Activated CD4-positive, alpha-beta T cell treated with anti-CD3 and anti-CD28 coated beads, Interleukin-2, amount 10 ng/mL, durations not matched to agents 24 days and 14 days (primary cell): ENCODE measurements at regions of chr3 and their contacts with region 1.

Region 1: DNA sequence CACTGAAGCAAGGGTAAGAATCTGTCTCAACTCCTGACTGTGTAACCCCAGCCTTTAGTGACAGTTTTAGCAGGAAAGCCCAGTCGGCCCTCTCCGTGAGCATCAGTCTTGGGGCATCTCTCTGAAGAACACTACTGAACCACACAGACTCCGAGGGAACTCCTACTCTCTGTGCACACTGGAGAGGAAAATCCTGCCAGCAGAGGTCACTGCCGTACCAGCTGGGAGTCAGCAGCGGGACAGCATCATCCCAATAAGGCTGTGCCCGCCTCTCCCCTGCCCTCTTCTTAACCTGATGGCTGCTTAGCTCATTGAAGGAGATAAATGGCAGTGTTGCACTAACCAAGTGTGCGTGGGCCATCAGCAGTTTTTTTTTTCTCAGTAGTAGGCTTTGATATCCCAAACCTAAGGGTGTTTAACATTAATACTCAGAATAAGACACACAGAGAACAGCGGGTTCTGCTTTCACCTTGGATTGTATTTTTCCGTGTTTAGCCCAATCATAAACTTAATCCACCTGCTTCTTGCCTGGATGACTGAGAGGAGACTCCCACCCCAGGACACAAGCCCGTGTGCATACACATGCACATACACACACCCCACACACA is 26.6 kb upstream of the RASA2 start:
- DNase-seq: peak; percentile 96
- H3K4me3 Mint-ChIP-seq: no peak overlapping the region
- H3K27ac Mint-ChIP-seq: no peak overlapping the region
- H3K4me1 Mint-ChIP-seq: peaks cover 19% of the 10 kb centered on the region
- H3K27me3 Mint-ChIP-seq: peaks cover 1% of the 10 kb centered on the region

Region 2: DNA sequence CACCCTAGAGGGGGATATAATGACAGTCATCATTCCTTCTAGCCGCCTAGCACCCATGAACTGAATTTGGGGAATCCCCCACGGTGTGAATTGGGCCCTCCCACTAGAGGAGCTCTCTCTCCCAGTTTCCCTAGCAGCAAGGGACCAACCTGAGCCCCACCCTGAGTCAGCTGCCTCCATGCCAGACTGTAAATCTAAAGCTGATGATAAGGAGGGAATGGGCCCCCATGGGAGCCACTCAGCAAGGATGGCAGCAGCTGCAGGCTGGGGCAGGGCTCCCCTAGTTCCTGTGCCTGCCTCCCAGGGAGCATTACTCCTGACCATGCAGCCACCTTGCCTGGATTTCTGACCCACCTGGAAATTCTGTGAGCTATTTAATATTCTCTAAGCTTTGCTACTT is 285.5 kb before region 1 on chr3:
- intact Hi-C with region 1: no loop called
- DNase-seq: no peak
- H3K4me3 Mint-ChIP-seq: no peak overlapping the region
- H3K27ac Mint-ChIP-seq: no peak overlapping the region
- H3K4me1 Mint-ChIP-seq: no peaks in the 10 kb centered on the region
- H3K27me3 Mint-ChIP-seq: peaks cover 9% of the 10 kb centered on the region

Region 3: DNA sequence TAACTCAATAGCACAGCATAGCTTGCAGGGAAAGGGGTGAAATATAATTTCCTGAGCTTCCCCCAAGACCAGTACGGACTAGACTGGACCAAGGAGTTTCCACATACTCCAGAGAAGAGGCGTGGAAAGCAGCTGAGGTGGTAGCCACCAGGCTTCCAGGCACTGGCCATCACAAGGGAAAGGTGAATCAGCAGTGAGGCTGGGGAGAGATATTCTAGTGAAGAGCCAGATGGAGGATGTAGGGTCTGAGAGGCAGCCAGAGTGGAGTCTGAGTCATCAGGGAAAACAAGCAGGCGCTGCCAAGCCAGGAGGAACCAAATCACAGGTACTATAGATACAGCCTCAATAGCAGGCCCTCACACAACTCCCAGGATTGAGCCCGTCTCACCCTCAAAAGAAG is 17.0 kb after region 1 on chr3:
- intact Hi-C with region 1: loop called (anchors 1 kb)
- DNase-seq: peak; percentile 53
- H3K4me3 Mint-ChIP-seq: no peak overlapping the region
- H3K27ac Mint-ChIP-seq: no peak overlapping the region
- H3K4me1 Mint-ChIP-seq: peaks cover 30% of the 10 kb centered on the region
- H3K27me3 Mint-ChIP-seq: peaks cover 13% of the 10 kb centered on the region

Region 4: GRCh38 chr3:141561426-141562034 is 101.3 kb after region 1 on chr3:
- intact Hi-C with region 1: loop called (anchors 1 kb)
- DNase-seq: peak; percentile 87
- H3K4me3 Mint-ChIP-seq: no peak overlapping the region
- H3K27ac Mint-ChIP-seq: no peak overlapping the region
- H3K4me1 Mint-ChIP-seq: peaks cover 13% of the 10 kb centered on the region
- H3K27me3 Mint-ChIP-seq: no peaks in the 10 kb centered on the region

Region 5: GRCh38 chr3:141644931-141645330 is 184.7 kb after region 1 on chr3:
- intact Hi-C with region 1: loop called (anchors 1 kb)
- DNase-seq: peak; percentile 91
- H3K4me3 Mint-ChIP-seq: no peak overlapping the region
- H3K27ac Mint-ChIP-seq: no peak overlapping the region
- H3K4me1 Mint-ChIP-seq: no peaks in the 10 kb centered on the region
- H3K27me3 Mint-ChIP-seq: peaks cover 2% of the 10 kb centered on the region